Mammary epithelial cell (primary cell): ENCODE measurements at regions of chrX and their contacts with region 1.

Region 1: GRCh38 chrX:24395775-24396174 is 35.3 kb downstream of the SUPT20HL1 start:
- DNase-seq: peak; percentile 68
- H3K4me3 ChIP-seq: no peak overlapping the region
- H3K27ac ChIP-seq: no peak overlapping the region
- H3K4me1 ChIP-seq: peaks cover 30% of the 10 kb centered on the region
- H3K27me3 ChIP-seq: peaks cover 8% of the 10 kb centered on the region
- CTCF ChIP-seq: peak; percentile 84 to 90

Region 2: GRCh38 chrX:24355095-24355494 is 40.7 kb before region 1 on chrX:
- CTCF ChIA-PET with region 1: interaction called, 14 read pairs
- dilution Hi-C with region 1: no loop called
- in situ Hi-C with region 1: no loop called
- intact Hi-C with region 1: no loop called
- DNase-seq: no peak
- H3K4me3 ChIP-seq: no peak overlapping the region
- H3K27ac ChIP-seq: no peak overlapping the region
- H3K4me1 ChIP-seq: no peaks in the 10 kb centered on the region
- H3K27me3 ChIP-seq: no peaks in the 10 kb centered on the region
- CTCF ChIP-seq: no peak

Region 3: DNA sequence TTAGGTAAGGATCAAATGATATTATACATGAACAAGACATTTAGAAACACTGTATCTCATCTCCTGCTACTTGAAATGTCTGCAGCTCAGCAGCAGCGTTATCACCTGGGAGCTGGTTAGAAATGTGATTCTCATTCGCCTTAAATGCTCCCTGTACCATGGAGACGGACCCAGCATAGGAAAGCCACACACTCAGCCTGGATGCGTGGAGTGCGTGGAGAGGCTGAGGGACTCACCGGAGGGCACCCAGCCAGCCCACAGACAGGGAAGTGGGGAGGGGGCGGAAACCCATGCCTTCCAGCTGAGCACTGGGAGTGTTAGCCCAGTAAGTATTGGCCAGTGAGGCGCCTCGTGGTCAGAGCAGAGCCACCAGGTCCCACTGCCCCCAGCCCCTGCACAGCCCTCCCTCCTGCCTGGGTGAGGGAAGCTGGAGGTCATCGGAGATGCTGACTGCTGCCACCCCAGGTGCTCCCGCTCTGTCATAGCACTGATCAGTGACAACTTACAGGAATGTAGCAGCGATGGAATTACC is 20.1 kb before region 1 on chrX:
- CTCF ChIA-PET with region 1: no interaction called
- dilution Hi-C with region 1: no loop called
- in situ Hi-C with region 1: no loop called
- intact Hi-C with region 1: no loop called
- DNase-seq: no peak
- H3K4me3 ChIP-seq: no peak overlapping the region
- H3K27ac ChIP-seq: no peak overlapping the region
- H3K4me1 ChIP-seq: no peaks in the 10 kb centered on the region
- H3K27me3 ChIP-seq: peaks cover 7% of the 10 kb centered on the region
- CTCF ChIP-seq: no peak

Region 4: GRCh38 chrX:24464836-24465531 is 69.2 kb after region 1 on chrX and contains the start of gene PDK3:
- CTCF ChIA-PET with region 1: no interaction called
- dilution Hi-C with region 1: no loop called
- in situ Hi-C with region 1: no loop called
- intact Hi-C with region 1: loop called (anchors 2 kb)
- DNase-seq: peak; percentile 83
- H3K4me3 ChIP-seq: peak within 1 kb of the TSS; percentile 60 to 66 (median 62)
- H3K27ac ChIP-seq: peak within 1 kb of the TSS; percentile 68
- H3K4me1 ChIP-seq: peaks cover 4% of the 10 kb centered on the region
- H3K27me3 ChIP-seq: no peaks in the 10 kb centered on the region
- CTCF ChIP-seq: no peak
- total RNA-seq, gene PDK3: 1.2 to 6.0 TPM

Region 5: GRCh38 chrX:24542756-24543155 is 147.0 kb after region 1 on chrX:
- CTCF ChIA-PET with region 1: no interaction called
- dilution Hi-C with region 1: no loop called
- in situ Hi-C with region 1: no loop called
- intact Hi-C with region 1: no loop called
- DNase-seq: no peak
- H3K4me3 ChIP-seq: no peak overlapping the region
- H3K27ac ChIP-seq: no peak overlapping the region
- H3K4me1 ChIP-seq: no peaks in the 10 kb centered on the region
- H3K27me3 ChIP-seq: no peaks in the 10 kb centered on the region
- CTCF ChIP-seq: no peak

Region 6: DNA sequence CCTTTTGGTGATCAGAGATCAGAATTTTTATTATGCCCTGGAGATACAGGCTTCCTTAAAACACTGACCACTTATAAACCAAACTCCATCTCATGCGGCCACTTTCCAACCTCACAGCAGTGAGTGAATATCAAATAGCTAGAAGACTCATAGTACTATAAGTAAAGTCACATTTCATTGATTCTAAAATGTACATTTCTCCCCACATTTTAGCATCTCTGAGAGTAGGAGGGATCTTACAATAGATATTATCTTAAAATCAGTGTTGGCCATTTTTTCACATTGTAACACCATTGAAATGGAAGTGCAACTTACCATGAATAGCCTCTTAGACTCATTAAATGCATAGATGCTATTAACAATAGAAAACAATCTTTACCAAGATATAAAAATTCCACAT is 233.9 kb after region 1 on chrX:
- CTCF ChIA-PET with region 1: no interaction called
- dilution Hi-C with region 1: no loop called
- in situ Hi-C with region 1: no loop called
- intact Hi-C with region 1: no loop called
- DNase-seq: no peak
- H3K4me3 ChIP-seq: no peak overlapping the region
- H3K27ac ChIP-seq: no peak overlapping the region
- H3K4me1 ChIP-seq: no peaks in the 10 kb centered on the region
- H3K27me3 ChIP-seq: no peaks in the 10 kb centered on the region
- CTCF ChIP-seq: no peak

Region 7: GRCh38 chrX:24693453-24694202 is 297.9 kb after region 1 on chrX and contains the start of gene POLA1:
- CTCF ChIA-PET with region 1: no interaction called
- dilution Hi-C with region 1: no loop called
- in situ Hi-C with region 1: no loop called
- intact Hi-C with region 1: loop called (anchors 5 kb)
- DNase-seq: peak; percentile 94
- H3K4me3 ChIP-seq: peak within 1 kb of the TSS; percentile 65 to 79 (median 74)
- H3K27ac ChIP-seq: peak within 1 kb of the TSS; percentile 78
- H3K4me1 ChIP-seq: peaks cover 8% of the 10 kb centered on the region
- H3K27me3 ChIP-seq: no peaks in the 10 kb centered on the region
- CTCF ChIP-seq: peak in 1 of 2 donors; percentile 36
- total RNA-seq, gene POLA1: 9.8 to 14.8 TPM

Region 8: DNA sequence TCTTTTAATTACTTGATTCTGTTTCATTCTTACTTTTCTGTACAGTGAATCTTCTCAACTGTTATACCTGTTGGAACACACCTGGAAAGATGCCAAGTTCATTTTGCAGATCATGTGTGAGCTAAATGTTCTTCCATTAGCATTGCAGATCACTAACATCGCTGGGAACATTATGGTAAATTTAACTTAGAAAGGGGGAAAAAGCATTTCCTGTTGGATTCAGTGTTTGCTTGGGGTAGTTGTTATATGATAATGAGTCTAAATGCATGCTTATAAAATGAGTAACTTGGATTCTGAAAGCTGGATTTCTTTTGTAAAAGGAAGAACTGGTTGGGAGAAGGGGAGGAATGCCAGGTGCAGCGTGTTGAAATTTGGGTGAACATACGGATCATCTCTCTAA is 345.6 kb after region 1 on chrX:
- CTCF ChIA-PET with region 1: no interaction called
- dilution Hi-C with region 1: no loop called
- in situ Hi-C with region 1: loop called in 1 of 2 experiments (anchors 25 kb)
- intact Hi-C with region 1: loop called (anchors 10 kb)
- DNase-seq: no peak
- H3K4me3 ChIP-seq: no peak overlapping the region
- H3K27ac ChIP-seq: no peak overlapping the region
- H3K4me1 ChIP-seq: no peaks in the 10 kb centered on the region
- H3K27me3 ChIP-seq: no peaks in the 10 kb centered on the region
- CTCF ChIP-seq: no peak